ENCODE measurements at regions of chr12 and their contacts with region 1.

Region 1: DNA sequence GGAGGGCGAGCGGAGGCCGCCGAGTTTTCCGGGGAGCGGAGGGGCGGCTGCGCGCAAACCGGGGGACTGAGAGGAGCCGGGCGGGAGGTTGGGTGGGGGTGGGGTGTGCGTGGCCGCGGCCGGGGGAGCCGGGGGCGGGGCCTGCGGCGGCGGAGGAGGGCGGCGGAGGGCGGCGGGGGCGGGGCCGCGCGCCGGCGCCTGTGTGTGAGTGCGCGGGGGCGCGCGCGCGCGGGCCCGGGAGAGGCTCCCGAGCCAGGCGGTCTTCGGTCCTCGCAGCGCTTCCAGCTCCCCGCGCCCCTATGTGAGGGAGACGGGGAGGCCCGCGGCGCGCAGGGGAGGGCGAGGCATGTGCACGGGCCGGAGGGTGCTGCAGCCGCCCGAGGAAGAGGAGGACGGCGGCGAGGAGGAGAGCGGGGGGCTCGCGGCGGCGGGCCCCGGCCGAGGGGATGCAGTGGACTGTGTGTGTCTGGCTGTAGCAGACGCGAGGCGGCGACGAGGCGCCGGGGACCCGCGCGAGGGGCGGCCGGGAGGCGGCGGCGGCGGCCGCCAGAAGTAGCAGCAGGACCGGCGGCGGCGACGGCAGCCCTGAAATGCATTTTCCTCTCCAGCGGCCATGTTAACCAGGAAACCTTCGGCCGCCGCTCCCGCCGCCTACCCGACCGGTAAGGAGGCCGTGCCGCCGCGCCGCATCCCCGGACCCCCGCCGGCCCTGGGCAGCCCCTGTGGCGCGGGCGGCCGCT is at the start of gene DYRK2:
- DNase-seq: peak; percentile 75
- ATAC-seq: peak; percentile 44
- H3K4me3 ChIP-seq: peak within 1 kb of the TSS; percentile 96
- H3K27ac ChIP-seq: peak within 1 kb of the TSS; percentile 35
- H3K4me1 ChIP-seq: peaks cover 22% of the 10 kb centered on the region
- H3K27me3 ChIP-seq: no peaks in the 10 kb centered on the region
- CTCF ChIP-seq: no peak
- total RNA-seq, gene DYRK2: 20.6 and 26.3 TPM in 2 replicates

Region 2: GRCh38 chr12:67433385-67434175 is 215.1 kb before region 1 on chr12:
- CTCF ChIA-PET with region 1: no interaction called
- POLR2A ChIA-PET with region 1: interaction called, 3 read pairs
- intact Hi-C with region 1: loop called (anchors 2 kb)
- DNase-seq: peak; percentile 45
- ATAC-seq: no peak
- H3K4me3 ChIP-seq: no peak overlapping the region
- H3K27ac ChIP-seq: no peak overlapping the region
- H3K4me1 ChIP-seq: peaks cover 41% of the 10 kb centered on the region
- H3K27me3 ChIP-seq: no peaks in the 10 kb centered on the region
- CTCF ChIP-seq: no peak

Region 3: GRCh38 chr12:67592216-67593011 is 56.3 kb before region 1 on chr12:
- CTCF ChIA-PET with region 1: no interaction called
- POLR2A ChIA-PET with region 1: interaction called, 5 read pairs
- intact Hi-C with region 1: loop called (anchors 5 kb)
- DNase-seq: peak; percentile 66
- ATAC-seq: peak; percentile 56
- H3K4me3 ChIP-seq: peak overlapping the region; percentile 47
- H3K27ac ChIP-seq: peak overlapping the region; percentile 81
- H3K4me1 ChIP-seq: peaks cover 37% of the 10 kb centered on the region
- H3K27me3 ChIP-seq: no peaks in the 10 kb centered on the region
- CTCF ChIP-seq: no peak

Region 4: GRCh38 chr12:67720351-67720856 is 71.7 kb after region 1 on chr12:
- CTCF ChIA-PET with region 1: no interaction called
- POLR2A ChIA-PET with region 1: no interaction called
- intact Hi-C with region 1: loop called (anchors 5 kb)
- DNase-seq: peak; percentile 78
- ATAC-seq: peak; percentile 77
- H3K4me3 ChIP-seq: no peak overlapping the region
- H3K27ac ChIP-seq: no peak overlapping the region
- H3K4me1 ChIP-seq: peaks cover 30% of the 10 kb centered on the region
- H3K27me3 ChIP-seq: no peaks in the 10 kb centered on the region
- CTCF ChIP-seq: no peak

Region 5: GRCh38 chr12:67811437-67812361 is 163.0 kb after region 1 on chr12:
- CTCF ChIA-PET with region 1: no interaction called
- POLR2A ChIA-PET with region 1: no interaction called
- intact Hi-C with region 1: loop called (anchors 5 kb)
- DNase-seq: peak; percentile 84
- ATAC-seq: peak; percentile 86
- H3K4me3 ChIP-seq: no peak overlapping the region
- H3K27ac ChIP-seq: peak overlapping the region; percentile 76
- H3K4me1 ChIP-seq: peaks cover 30% of the 10 kb centered on the region
- H3K27me3 ChIP-seq: no peaks in the 10 kb centered on the region
- CTCF ChIP-seq: no peak

Region 6: DNA sequence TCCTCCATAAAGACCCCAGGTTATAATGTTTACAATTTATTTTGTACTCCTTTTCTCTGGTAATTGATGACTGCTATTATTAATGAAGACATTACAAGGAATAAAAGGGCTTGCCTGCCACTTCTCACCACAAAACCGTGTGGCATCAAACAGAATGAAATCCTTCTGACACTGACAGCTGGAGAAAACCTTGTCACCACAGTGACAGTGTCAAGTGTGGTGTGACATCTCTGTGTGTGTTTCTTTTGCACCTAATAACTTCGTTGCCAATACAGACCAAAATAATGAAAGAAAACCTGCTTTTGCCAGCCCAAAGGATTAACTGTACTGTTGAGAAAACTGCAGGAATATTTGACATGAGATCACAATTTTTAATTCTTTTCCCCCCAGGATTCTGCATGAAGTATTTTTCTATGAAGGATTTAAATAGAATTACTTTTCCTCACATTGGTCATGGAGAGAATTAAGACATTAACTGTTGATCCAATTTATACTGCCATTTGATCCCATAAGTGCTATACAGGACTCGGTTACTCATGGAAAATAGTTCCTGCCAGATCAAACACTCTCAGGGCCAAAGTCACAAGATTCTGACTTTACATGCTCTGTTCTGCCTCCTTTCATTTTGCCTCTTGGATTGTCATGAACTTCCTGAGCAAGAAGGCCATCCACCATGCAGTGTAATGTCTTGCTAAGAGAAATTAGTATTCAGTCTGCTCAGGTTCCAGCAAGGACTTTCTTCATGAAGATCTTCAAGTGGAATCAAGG is 280.1 kb after region 1 on chr12:
- CTCF ChIA-PET with region 1: interaction called, 3 read pairs
- POLR2A ChIA-PET with region 1: no interaction called
- intact Hi-C with region 1: loop called (anchors 5 kb)
- DNase-seq: peak; percentile 5
- ATAC-seq: peak; percentile 15; the same call in 1 of the 2 replicates
- H3K4me3 ChIP-seq: no peak overlapping the region
- H3K27ac ChIP-seq: no peak overlapping the region
- H3K4me1 ChIP-seq: no peaks in the 10 kb centered on the region
- H3K27me3 ChIP-seq: no peaks in the 10 kb centered on the region
- CTCF ChIP-seq: no peak

Measured in PC-3 (cell line).